ENCODE measurements at regions of chr11 and their contacts with region 1.

Region 1: GRCh38 chr11:27401833-27402316 is 38.9 kb upstream of the CCDC34 start:
- DNase-seq: no peak
- ATAC-seq: no peak
- H3K4me3 Mint-ChIP-seq: no peak overlapping the region
- H3K27ac Mint-ChIP-seq: no peak overlapping the region
- H3K4me1 Mint-ChIP-seq: no peaks in the 10 kb centered on the region
- H3K27me3 Mint-ChIP-seq: no peaks in the 10 kb centered on the region
- CTCF ChIP-seq: no peak

Region 2: DNA sequence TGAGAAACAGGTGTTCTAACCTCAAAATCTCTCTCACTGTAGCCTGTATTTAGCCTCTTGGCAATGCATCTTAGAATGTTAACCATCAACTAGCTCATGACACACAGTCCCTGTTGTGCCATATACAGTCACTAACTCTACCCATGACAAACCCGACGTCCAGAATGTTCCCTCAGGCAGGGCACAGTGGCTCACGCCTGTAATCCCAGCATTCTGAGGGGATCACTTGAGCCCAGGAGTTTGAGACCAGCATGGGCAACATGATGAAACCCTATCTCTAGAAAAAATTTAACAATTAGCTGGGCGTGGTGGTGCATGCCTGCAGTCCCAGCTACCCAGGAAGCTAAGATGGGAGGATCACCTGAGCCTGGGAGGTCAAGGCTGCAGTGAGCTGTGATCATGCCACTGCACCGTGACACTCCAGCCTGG is 20.6 kb before region 1 on chr11:
- CTCF ChIA-PET with region 1: no interaction called
- POLR2A ChIA-PET with region 1: no interaction called
- intact Hi-C with region 1: loop called (anchors 2 kb)
- DNase-seq: no peak
- ATAC-seq: no peak
- H3K4me3 Mint-ChIP-seq: no peak overlapping the region
- H3K27ac Mint-ChIP-seq: no peak overlapping the region
- H3K4me1 Mint-ChIP-seq: no peaks in the 10 kb centered on the region
- H3K27me3 Mint-ChIP-seq: no peaks in the 10 kb centered on the region
- CTCF ChIP-seq: no peak